ENCODE measurements at regions of chr12 and their contacts with region 1.

Region 1: DNA sequence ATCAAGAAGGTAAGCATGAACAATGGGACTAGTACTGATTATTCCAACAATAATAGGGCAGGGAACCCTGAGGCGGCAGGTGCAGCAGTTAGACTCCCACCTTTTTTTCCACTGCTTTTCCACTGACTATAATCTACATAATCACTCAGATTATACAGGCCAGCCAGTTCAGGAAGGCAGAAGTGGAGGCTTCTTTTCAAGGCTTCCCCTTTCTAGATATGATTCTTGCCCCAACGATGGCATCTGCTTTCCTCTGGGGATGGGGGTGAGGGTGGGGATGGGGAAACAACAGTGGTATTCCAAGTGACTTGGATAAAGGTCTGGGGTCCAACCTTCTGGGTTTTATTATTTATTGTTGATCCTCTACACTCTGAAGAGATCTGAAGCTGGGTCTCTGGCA is 331 bp downstream of the NCKAP1L start:
- DNase-seq: no peak
- ATAC-seq: peak; percentile 4
- H3K4me3 Mint-ChIP-seq: peak overlapping the region; percentile 99
- H3K27ac Mint-ChIP-seq: peak overlapping the region; percentile 98
- H3K4me1 Mint-ChIP-seq: peaks cover 39% of the 10 kb centered on the region
- H3K27me3 Mint-ChIP-seq: no peaks in the 10 kb centered on the region

Region 2: DNA sequence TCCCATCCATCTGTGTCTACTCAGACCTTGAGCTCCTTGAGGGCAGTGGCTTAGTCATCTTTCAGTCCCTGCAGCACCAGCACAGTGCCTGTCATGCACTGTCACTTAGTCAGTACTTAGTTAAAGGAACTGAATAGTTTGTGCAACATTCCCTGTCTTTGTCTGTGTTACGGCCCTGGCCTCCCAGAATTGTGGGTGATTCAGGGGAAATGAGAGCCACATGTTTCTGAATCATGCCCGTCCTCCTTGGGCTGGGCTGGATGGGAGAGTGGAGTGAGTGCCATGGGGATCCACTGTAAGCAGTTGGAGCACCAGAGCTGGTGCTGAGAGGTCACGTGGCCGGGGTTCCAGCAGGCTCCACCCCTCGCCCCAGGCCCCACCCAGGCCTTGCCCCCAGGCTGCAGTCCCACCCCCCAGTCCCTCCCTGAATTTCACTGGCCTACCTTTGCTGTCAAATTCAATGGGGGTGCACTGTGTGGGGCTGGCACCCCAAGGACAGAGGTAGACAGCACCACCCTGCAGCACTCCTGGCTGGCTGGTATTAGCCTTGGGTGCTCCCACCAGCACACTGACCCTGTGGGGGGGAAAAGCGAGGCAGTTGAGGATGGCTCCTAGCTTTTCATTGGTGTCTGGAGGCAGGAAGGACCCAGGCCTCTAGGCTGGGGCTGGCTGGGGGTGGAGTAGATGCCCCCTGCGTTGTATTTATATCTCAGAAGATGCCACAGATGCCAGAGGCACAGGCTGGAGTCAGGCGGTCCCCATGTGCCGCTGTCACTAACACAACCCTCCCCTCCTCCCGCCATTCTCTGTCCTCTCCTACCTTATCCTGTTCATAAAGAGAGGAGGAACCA is 86.3 kb before region 1 on chr12:
- CTCF ChIA-PET with region 1: no interaction called
- POLR2A ChIA-PET with region 1: interaction called, 8 read pairs
- intact Hi-C with region 1: loop called in 1 of 2 experiments (anchors 5 kb)
- DNase-seq: peak; percentile 80
- ATAC-seq: peak; percentile 85
- H3K4me3 Mint-ChIP-seq: peak overlapping the region; percentile 60
- H3K27ac Mint-ChIP-seq: peak overlapping the region; percentile 89
- H3K4me1 Mint-ChIP-seq: peaks cover 55% of the 10 kb centered on the region
- H3K27me3 Mint-ChIP-seq: no peaks in the 10 kb centered on the region

Region 3: GRCh38 chr12:54560374-54560858 is 62.5 kb after region 1 on chr12:
- CTCF ChIA-PET with region 1: interaction called, 3 read pairs
- POLR2A ChIA-PET with region 1: interaction called, 5 read pairs
- intact Hi-C with region 1: loop called in 1 of 2 experiments (anchors 1 kb)
- DNase-seq: peak; percentile 95
- ATAC-seq: peak; percentile 100
- H3K4me3 Mint-ChIP-seq: peak overlapping the region; percentile 66
- H3K27ac Mint-ChIP-seq: peak overlapping the region; percentile 93
- H3K4me1 Mint-ChIP-seq: peaks cover 33% of the 10 kb centered on the region
- H3K27me3 Mint-ChIP-seq: no peaks in the 10 kb centered on the region